Adrenal gland (tissue), 19 donors: ENCODE measurements at regions of chr3 and their contacts with region 1.

Region 1: DNA sequence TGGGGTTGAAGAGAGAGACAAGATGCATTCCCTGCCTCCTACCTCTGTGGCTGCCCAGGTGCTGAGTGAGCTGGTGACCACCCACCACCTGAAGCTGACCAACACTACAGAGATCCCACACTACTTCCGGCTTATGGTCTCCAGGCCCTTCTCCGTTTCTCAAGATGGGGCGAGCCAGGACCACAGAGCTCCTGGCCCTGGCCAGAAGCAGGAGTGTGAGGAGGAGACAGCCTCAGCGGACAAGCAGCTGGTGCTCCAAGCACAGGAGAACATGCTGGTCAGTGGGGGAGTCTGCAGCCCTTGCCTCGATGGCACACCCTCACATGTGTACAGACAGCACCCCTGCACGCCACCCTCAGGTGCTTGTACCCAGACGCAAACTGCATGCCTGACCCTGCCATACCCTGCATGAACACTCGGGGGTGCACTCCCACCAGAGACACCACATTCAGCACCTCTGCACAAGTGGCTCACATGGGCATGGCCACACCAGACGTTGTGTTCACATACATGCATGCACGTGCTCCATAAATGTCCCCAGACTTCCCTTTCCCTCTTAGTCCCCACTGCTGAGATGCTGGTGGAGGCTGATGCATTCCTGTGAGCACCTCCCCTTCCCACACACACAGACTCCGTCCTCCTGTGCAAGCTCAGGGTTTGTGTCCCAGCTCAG is 19.0 kb downstream of the ACAA1 start:
- DNase-seq: peak; percentile 58 to 87 (median 78)
- H3K4me3 ChIP-seq: no peak overlapping the region
- H3K27ac ChIP-seq: no peak overlapping the region
- H3K4me1 ChIP-seq: no peaks in the 10 kb centered on the region
- H3K27me3 ChIP-seq: no peaks in the 10 kb centered on the region
- CTCF ChIP-seq: peak; percentile 42 to 83 (median 78)
- POLR2A ChIP-seq: no peak

Region 2: GRCh38 chr3:38004415-38005076 is 113.3 kb before region 1 on chr3:
- intact Hi-C with region 1: loop called (anchors 5 to 10 kb)
- DNase-seq: peak; percentile 73 to 90 (median 82)
- H3K4me3 ChIP-seq: no peak overlapping the region
- H3K27ac ChIP-seq: no peak overlapping the region
- H3K4me1 ChIP-seq: no peaks in the 10 kb centered on the region
- H3K27me3 ChIP-seq: no peaks in the 10 kb centered on the region
- CTCF ChIP-seq: peak; percentile 57 to 76 (median 70)
- POLR2A ChIP-seq: no peak